ENCODE measurements at regions of chr3 and their contacts with region 1.

Region 1: GRCh38 chr3:39288300-39288808 is 8.5 kb upstream of the CX3CR1 start:
- DNase-seq: peak; percentile 91
- H3K4me3 Mint-ChIP-seq: no peak overlapping the region
- H3K27ac Mint-ChIP-seq: peak overlapping the region; percentile 13
- H3K4me1 Mint-ChIP-seq: peaks cover 24% of the 10 kb centered on the region
- H3K27me3 Mint-ChIP-seq: no peaks in the 10 kb centered on the region

Region 2: DNA sequence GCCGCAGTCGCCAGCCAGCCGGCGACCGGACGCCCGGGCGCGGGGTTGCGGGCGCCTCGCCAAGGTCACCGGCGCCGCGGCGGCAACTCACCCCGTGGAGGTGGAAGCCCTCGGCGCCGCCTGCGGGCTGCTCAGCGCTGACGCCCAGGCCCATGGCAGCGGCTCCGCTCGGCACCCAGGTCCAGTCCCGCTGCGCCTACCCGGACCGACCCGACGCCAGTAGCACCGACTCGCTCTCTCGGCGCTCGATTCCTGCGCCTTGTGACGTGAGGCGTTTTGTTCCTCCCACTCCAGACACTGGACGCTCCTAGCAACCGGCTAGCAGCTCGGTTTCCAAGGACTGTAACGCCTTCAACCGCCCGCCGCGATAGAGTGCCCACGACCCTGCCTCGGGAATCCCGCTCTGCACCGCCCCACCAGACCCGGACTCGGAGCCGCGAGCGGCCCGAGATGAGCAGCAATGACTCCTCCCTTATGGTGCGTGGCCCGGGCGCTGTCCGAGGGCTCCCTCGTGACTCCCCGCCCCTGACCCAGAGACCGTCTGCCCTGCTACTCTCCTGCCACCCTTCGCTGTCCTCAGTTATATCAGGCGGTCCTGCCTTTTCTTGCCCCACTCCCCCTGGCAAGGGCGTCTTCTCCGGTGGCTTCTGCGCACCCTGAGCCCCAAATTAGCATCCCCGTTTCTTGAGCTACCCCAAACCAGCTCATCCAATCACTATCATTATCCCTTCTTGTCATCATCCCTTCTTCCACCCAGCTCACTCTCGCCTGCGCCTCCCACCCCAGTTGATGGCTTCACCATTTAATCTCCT is 180.8 kb before region 1 on chr3 and contains the starts of genes GORASP1 and TTC21A:
- CTCF ChIA-PET with region 1: interaction called, 57 read pairs
- POLR2A ChIA-PET with region 1: interaction called, 3 read pairs
- intact Hi-C with region 1: no loop called
- DNase-seq: peak; percentile 83
- H3K4me3 Mint-ChIP-seq: peak within 1 kb of the TSS; percentile 81
- H3K27ac Mint-ChIP-seq: peak within 1 kb of the TSS; percentile 74
- H3K4me1 Mint-ChIP-seq: peaks cover 42% of the 10 kb centered on the region
- H3K27me3 Mint-ChIP-seq: no peaks in the 10 kb centered on the region
- total RNA-seq, gene GORASP1: 32.7 to 34.1 TPM
- total RNA-seq, gene TTC21A: 1.7 to 1.8 TPM

Region 3: DNA sequence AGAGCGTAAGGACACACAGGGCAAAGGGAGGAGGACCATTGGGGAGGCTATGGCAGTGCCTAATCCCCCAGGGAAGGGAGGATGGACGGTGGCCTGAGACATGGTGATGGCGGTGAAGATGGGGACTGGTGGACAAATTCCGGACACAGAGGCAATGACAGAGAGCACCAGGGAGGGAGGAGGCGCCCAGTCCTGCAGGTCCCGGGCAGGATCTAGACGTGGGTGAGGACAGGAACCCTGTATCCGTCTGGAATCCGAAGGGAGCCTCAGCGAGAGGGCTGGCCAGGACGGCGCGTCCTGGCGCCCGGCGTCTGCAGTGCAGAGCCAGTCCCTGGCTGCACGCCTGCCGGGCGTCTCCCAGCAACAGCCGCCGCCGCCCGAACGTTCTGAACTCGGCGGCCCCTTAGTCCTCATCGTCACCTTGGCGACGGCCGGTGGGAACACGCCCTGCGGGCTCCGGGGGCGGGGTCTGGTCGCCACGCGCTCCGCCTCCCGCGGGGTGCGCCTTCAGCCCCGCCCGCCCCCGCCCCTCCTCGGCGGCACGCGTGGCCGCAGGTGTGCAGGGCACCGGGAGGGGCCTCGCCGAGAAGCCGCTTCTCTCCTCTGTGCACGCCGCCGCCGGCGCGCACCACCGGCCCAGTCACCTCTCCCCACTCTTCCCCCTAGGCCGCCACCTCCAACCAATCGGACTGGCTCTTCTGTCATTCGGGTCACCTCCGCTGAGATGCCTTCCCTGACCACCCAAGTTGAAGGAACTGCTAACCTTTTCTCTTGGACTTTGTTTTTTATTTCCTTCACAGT is 107.6 kb before region 1 on chr3:
- CTCF ChIA-PET with region 1: interaction called, 587 read pairs
- POLR2A ChIA-PET with region 1: interaction called, 3 read pairs
- intact Hi-C with region 1: no loop called
- DNase-seq: peak; percentile 92
- H3K4me3 Mint-ChIP-seq: peak overlapping the region; percentile 76
- H3K27ac Mint-ChIP-seq: peak overlapping the region; percentile 78
- H3K4me1 Mint-ChIP-seq: peaks cover 49% of the 10 kb centered on the region
- H3K27me3 Mint-ChIP-seq: no peaks in the 10 kb centered on the region

Region 4: GRCh38 chr3:39232859-39233258 is 55.5 kb before region 1 on chr3:
- CTCF ChIA-PET with region 1: interaction called, 11 read pairs
- POLR2A ChIA-PET with region 1: no interaction called
- intact Hi-C with region 1: no loop called
- DNase-seq: no peak
- H3K4me3 Mint-ChIP-seq: no peak overlapping the region
- H3K27ac Mint-ChIP-seq: no peak overlapping the region
- H3K4me1 Mint-ChIP-seq: peaks cover 10% of the 10 kb centered on the region
- H3K27me3 Mint-ChIP-seq: peaks cover 2% of the 10 kb centered on the region

Region 5: GRCh38 chr3:39327746-39328349 is 39.5 kb after region 1 on chr3:
- CTCF ChIA-PET with region 1: interaction called, 18 read pairs
- POLR2A ChIA-PET with region 1: no interaction called
- intact Hi-C with region 1: no loop called
- DNase-seq: peak; percentile 69
- H3K4me3 Mint-ChIP-seq: no peak overlapping the region
- H3K27ac Mint-ChIP-seq: peak overlapping the region; percentile 35
- H3K4me1 Mint-ChIP-seq: peaks cover 62% of the 10 kb centered on the region
- H3K27me3 Mint-ChIP-seq: no peaks in the 10 kb centered on the region

Region 6: DNA sequence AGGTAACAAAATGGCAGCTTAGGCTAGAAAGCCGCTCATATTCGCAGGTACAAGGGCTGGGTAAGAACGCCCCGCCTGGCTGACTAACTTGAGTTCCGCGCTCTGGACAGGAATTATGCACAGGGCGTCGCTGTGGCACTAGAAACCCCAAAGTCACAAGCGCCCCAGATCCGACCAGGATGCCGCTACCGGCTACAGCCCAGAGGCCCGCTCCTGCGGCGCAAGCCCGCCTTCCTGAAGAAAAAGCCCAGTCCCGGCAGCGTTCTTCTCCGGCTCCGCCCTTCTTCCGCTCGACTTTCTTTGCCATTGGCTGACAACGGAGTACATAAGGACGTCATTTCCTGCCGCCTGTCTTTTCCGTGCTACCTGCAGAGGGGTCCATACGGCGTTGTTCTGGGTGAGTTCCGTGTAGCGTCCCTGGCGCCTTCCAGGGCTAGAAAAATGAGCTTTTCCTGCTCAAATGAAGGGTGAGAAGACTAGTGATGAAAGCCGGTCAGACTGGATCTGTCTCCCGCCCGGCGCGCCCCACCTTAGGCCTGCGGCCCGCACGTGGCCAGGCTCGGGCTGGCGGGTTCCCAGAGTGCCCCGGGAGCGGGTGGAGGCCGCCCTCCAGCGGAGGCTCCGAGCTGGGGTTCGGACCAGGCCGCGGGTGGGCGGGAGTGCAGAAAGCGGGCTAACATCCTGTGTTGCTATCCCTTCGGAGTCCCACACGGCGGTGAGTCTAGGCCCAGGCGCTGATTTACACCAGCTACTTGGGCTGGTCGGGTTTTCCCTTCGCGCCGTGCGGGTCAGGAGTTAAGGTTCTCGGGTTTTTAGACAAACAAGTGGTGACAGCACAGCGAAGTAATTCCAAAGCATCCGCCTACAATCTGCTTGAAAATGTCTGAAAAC is 118.3 kb after region 1 on chr3 and contains the start of gene RPSA:
- CTCF ChIA-PET with region 1: interaction called, 13 read pairs
- POLR2A ChIA-PET with region 1: interaction called, 6 read pairs
- intact Hi-C with region 1: no loop called
- DNase-seq: peak; percentile 98
- H3K4me3 Mint-ChIP-seq: peak within 1 kb of the TSS; percentile 95
- H3K27ac Mint-ChIP-seq: peak within 1 kb of the TSS; percentile 99
- H3K4me1 Mint-ChIP-seq: peaks cover 46% of the 10 kb centered on the region
- H3K27me3 Mint-ChIP-seq: peaks cover 2% of the 10 kb centered on the region
- total RNA-seq, gene RPSA: 2,627 to 2,738 TPM

Region 7: GRCh38 chr3:39587113-39587512 is 298.8 kb after region 1 on chr3:
- CTCF ChIA-PET with region 1: no interaction called
- POLR2A ChIA-PET with region 1: no interaction called
- intact Hi-C with region 1: no loop called
- DNase-seq: no peak
- H3K4me3 Mint-ChIP-seq: no peak overlapping the region
- H3K27ac Mint-ChIP-seq: no peak overlapping the region
- H3K4me1 Mint-ChIP-seq: no peaks in the 10 kb centered on the region
- H3K27me3 Mint-ChIP-seq: no peaks in the 10 kb centered on the region